Left cardiac atrium (tissue), 4 donors: ENCODE measurements at regions of chr14 and their contacts with region 1.

Region 1: DNA sequence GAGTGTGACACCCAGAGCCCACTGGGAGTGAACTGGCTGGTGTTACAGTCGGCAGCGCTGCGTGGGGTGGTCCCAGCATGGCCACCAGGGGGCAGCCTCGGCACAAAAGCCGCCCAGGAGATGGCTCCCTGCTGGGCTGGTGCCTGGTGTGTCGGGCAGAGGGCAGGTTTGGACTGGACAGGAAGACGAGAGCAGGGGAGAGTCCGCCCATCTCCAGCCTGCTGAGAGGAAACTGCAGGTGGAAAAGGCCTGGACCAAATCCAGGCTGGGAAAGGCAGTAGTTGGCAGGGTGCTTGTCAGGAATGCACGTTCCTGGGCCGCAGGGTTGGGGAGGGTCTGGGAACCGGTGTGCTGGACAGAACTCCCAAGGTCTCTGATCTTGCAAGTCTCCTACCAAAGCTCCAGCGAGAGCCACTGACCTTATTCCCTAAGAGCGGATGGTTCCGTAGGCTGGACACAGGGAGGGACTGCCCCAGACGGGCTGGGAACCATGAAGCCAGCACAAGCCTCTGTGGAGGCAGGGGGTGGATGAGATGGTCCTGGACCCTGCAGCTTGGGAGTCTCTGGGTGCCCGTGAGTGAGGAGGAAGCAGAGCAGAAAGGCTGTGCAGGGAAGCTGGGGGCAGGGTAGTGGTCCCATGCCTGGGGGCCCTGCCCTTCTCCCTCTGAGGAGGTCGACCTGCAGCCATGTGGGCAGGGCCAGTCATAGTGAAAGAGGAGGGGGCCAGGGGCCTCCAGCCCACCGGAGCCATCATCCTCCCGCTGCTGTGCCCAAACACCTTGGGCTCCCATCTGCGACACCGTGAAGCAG is 1.8 kb downstream of the AHNAK2 start:
- DNase-seq: peak; percentile 88
- ATAC-seq: peak; percentile 34 to 67

Region 2: GRCh38 chr14:104932676-104933631 is 43.4 kb before region 1 on chr14:
- intact Hi-C with region 1: loop called in 1 of 2 experiments (anchors 5 kb)
- DNase-seq: peak; percentile 91
- ATAC-seq: peak; percentile 87 to 89

Region 3: DNA sequence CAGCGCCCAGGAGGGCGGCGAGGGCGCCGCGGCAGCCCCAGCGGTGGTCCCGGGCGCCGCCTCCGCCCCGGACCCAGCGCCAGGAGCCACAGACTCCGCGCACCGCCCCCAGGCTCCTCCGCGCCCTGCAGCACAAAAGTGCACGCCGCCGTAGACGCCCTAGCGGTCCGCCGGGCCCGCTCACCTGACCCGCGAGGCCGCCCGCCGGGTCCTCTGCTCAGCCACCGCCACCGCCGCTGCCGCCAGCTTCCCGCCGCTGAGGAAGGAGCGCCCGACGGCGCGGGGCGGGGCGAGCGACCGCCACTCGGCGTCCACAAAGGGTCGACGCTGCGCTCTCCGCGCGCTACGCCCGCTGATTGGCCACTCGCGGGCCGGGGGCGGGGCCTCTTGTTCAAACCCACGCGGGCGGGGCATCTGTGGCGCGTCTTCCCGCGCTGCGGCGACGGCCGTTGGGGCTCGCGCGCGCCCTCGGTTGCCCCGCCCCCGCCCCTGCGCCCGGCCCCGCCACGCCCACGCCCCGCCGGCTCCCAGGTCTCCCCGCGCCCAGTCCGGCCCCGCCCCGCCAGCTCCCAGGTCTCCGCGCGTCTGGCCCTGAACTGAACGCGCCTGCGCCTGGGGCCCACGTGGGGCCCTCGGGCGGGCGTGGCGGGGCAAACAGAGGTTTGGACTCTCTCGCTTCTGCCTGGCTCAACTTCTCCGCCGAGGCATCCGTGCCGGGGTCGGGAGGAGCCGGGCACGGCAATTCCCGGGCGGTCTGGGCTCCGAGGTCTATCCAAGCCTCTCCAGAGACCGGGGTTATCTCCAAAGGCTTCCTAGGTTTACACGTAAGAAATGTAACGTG is 44.6 kb after region 1 on chr14 and contains the start of gene CDCA4:
- intact Hi-C with region 1: loop called in 1 of 2 experiments (anchors 5 kb)
- DNase-seq: peak; percentile 98
- ATAC-seq: peak; percentile 96 to 97
- total RNA-seq, gene CDCA4: 3.2 to 3.3 TPM

Region 4: DNA sequence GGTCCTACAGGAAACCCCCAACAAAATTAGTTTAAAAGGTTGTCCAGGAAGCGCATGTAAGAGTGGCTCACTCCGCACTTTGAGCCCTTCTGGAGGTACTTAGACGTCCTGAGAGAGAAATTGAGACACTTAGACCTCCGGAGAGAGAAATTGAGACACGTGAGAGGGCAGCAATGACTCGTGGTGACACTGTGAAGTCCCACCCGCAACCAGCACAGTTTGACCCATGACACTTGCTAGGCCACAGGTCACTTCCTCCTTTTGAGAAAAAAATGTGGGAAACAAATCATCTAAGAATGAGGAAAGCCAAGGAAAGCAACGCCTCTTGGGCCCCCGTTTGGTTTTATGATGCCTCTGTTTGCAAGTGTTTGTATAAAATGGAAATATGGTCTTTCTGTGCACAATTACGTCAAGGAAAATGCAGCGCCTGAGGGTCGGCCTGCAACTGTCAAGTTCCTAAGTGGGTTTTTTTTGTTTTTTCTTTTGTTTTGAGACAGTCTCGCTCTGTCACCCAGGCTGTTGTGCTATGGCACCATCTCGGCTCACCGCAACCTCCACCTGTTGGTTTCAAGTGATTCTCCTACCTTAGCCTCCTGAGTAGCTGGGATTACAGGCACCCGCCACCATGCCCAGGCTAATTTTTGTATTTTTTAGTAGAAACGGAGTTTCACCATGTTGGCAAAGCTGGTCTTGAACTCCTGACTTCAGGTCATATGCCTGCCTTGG is 58.1 kb after region 1 on chr14:
- intact Hi-C with region 1: no loop called
- DNase-seq: no peak
- ATAC-seq: peak in 1 of 2 donors; percentile 19

Region 5: GRCh38 chr14:105045710-105046326 is 69.4 kb after region 1 on chr14:
- intact Hi-C with region 1: loop called (anchors 2 to 10 kb)
- DNase-seq: peak; percentile 91
- ATAC-seq: peak; percentile 89 to 96

Region 6: GRCh38 chr14:105086833-105087307 is 110.5 kb after region 1 on chr14:
- intact Hi-C with region 1: loop called (anchors 1 to 2 kb)
- DNase-seq: peak; percentile 82
- ATAC-seq: peak; percentile 57 to 59

Region 7: DNA sequence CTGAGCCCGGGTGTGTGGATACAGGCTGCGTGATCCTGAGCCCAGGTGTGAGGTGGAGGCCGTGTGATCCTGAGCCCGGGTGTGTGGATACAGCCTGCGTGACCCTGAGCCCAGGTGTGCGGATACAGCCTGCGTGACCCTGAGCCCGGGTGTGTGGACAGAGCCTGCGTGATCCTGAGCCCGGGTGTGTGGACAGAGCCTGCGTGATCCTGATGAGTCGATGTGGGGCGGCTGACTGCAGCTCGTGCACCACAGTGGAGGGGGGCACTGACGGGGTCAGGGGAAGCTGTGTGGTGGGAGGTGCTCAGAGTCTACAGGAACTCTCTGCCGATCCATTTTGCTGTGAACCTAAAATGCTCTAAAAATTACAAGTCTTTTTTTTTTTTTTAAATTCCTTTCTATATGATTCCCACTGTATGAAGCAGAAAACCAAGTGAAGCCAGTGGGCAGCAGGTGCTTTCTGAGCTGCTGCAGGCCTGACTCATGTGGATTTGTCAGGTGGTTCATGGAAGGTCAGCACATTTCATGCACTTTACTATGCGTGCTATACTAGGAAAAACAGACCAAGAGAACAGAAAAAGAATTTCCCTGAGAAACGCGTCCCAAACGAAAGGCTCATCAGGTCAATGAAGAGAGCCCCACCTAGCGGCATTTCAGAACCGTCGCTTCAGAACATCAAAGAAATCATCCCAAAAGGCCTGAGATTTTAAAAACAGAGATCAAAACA is 305.1 kb after region 1 on chr14:
- intact Hi-C with region 1: loop called in 1 of 2 experiments (anchors 10 kb)
- DNase-seq: no peak
- ATAC-seq: peak; percentile 18 to 55